WTC11 (cell line): ENCODE measurements at regions of chr2 and their contacts with region 1.

Region 1: DNA sequence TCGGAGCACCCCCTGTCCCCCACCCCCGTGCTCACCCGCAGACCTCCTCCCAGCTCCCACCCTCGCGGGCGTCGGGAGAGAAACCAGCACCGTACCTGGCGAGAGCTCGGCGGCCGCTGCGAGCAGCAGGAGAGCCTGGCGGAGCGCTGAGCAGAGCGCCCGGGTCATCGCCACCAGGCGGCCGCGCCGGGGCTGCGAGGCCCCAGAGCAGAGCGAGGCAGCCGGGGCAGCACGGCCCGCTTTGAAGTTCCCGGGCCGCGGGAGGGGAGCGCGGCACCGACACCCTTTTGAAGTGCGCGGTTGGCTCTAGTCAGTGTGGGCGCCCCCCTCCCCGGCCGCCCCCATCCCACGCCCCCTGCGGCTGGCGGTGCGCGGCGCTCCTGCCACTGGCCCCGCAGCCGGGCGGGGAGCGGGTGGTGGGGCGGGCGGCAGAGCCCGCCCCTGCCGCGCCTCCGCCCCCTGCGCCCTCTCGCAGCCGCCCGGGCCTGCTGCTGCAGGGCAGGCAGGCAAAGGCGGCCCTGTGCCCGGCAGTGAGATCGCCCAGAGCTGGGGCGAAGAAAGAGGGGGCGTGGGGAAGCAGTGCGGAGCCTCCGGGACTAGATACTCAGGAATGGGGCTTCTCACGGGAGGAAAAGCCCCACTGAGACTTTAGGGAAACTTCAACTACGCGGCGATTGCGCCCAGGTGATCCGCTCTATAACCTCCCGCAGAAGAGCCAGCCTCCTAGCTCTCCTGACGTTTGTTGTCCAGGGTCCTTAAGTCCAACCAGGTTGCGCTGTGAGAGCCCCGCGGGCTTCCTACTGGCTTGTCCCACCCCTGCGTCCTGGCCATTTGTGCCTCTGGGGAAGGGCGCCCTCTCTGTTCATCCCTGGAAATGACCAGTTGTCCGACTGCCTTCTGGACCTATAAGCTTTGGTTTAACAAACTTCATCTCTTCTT is at the start of gene ACVR1C:
- DNase-seq: peak; percentile 92
- ATAC-seq: peak; percentile 93
- H3K4me3 Mint-ChIP-seq: peak within 1 kb of the TSS; percentile 80
- H3K27ac Mint-ChIP-seq: no peak within 1 kb of the TSS
- H3K4me1 Mint-ChIP-seq: peaks cover 7% of the 10 kb centered on the region; the same call in 1 of the 2 replicates
- H3K27me3 Mint-ChIP-seq: peaks cover 64% of the 10 kb centered on the region
- CTCF ChIP-seq: peak; percentile 75
- total RNA-seq, gene ACVR1C: 1.1 to 1.6 TPM (median 1.2 TPM) in 3 replicates

Region 2: DNA sequence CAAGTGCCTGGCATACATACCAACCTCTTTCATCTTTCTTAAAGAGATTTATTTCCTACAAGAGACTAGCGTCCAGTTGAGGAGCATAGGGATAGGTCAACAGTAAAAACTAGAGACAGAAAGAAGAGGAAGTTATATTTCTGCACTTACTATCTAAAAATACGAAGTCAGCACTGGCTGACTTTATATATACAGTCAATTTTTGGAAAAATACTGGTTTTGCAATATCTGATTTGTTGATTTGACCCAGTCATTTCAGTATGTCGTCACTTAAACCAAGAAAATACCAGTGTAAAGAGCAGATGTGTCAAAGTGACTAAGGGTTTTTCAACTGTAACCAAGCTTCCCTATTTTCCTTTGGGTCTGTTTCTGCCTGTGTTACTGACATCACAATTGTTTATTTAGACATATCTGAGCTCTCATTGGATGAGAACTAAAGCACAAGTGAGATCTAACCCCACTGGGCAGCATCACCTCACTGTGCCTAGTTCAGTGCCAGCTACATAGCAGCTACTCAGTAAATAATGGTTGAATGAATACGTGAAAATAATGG is 207.9 kb before region 1 on chr2:
- CTCF ChIA-PET with region 1: no interaction called
- POLR2A ChIA-PET with region 1: no interaction called
- DNase-seq: no peak
- ATAC-seq: no peak
- H3K4me3 Mint-ChIP-seq: no peak overlapping the region
- H3K27ac Mint-ChIP-seq: no peak overlapping the region
- H3K4me1 Mint-ChIP-seq: no peaks in the 10 kb centered on the region
- H3K27me3 Mint-ChIP-seq: no peaks in the 10 kb centered on the region
- CTCF ChIP-seq: no peak

Region 3: GRCh38 chr2:157596992-157597681 is 31.6 kb before region 1 on chr2:
- CTCF ChIA-PET with region 1: interaction called, 41 read pairs
- POLR2A ChIA-PET with region 1: interaction called, 3 read pairs
- DNase-seq: peak; percentile 86
- ATAC-seq: peak; percentile 94
- H3K4me3 Mint-ChIP-seq: peak overlapping the region; percentile 54
- H3K27ac Mint-ChIP-seq: no peak overlapping the region
- H3K4me1 Mint-ChIP-seq: peaks cover 4% of the 10 kb centered on the region
- H3K27me3 Mint-ChIP-seq: peaks cover 36% of the 10 kb centered on the region
- CTCF ChIP-seq: peak; percentile 47; the same call in 1 of the 2 replicates

Region 4: GRCh38 chr2:157644776-157645175 is 16.0 kb after region 1 on chr2:
- CTCF ChIA-PET with region 1: interaction called, 20 read pairs
- POLR2A ChIA-PET with region 1: no interaction called
- DNase-seq: no peak
- ATAC-seq: no peak
- H3K4me3 Mint-ChIP-seq: no peak overlapping the region
- H3K27ac Mint-ChIP-seq: no peak overlapping the region
- H3K4me1 Mint-ChIP-seq: no peaks in the 10 kb centered on the region
- H3K27me3 Mint-ChIP-seq: peaks cover 41% of the 10 kb centered on the region
- CTCF ChIP-seq: no peak

Region 5: DNA sequence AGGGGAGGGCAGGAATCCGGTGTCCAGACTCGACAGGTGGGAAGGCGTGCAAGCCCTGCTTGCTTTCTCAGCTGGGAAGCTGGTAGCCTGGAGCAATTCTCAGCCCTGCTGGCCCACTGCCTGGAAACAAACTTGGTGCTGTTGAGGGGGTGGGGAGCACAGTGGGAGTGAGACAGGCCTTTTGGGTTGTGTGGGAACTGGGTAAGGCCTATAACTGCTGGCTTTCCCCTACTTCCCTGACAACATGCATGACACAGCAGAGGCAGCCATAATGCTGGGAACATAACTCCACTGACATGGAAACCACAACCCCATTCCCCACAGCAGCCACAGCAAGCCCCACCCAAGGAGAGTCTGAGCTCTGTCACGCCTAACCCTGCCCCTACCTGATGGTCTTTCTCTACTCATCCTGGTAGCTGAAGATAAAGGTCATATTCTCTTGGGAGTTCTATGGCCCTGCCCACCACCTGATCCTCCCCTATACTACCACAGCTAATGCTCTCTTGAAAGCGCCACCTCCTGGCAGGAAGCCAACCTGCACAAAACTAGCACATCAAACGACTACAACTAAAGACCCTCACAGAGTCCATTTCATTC is 122.8 kb after region 1 on chr2:
- CTCF ChIA-PET with region 1: interaction called, 12 read pairs
- POLR2A ChIA-PET with region 1: no interaction called
- DNase-seq: peak; percentile 71
- ATAC-seq: peak; percentile 96
- H3K4me3 Mint-ChIP-seq: no peak overlapping the region
- H3K27ac Mint-ChIP-seq: 0 out of 2 replicates have a peak overlapping the region, but pooled peaks have one; percentile 11
- H3K4me1 Mint-ChIP-seq: peaks cover 8% of the 10 kb centered on the region; the same call in 1 of the 2 replicates
- H3K27me3 Mint-ChIP-seq: no peaks in the 10 kb centered on the region; the same call in 1 of the 2 replicates
- CTCF ChIP-seq: peak; percentile 69; the same call in 1 of the 2 replicates

Region 6: GRCh38 chr2:158006961-158007719 is 378.4 kb after region 1 on chr2:
- CTCF ChIA-PET with region 1: interaction called, 25 read pairs
- POLR2A ChIA-PET with region 1: no interaction called
- DNase-seq: peak; percentile 32
- ATAC-seq: peak; percentile 54
- H3K4me3 Mint-ChIP-seq: no peak overlapping the region
- H3K27ac Mint-ChIP-seq: no peak overlapping the region
- H3K4me1 Mint-ChIP-seq: peaks cover 39% of the 10 kb centered on the region
- H3K27me3 Mint-ChIP-seq: peaks cover 29% of the 10 kb centered on the region
- CTCF ChIP-seq: no peak